Natural killer cell (primary cell): ENCODE measurements at regions of chr16 and their contacts with region 1.

Region 1: DNA sequence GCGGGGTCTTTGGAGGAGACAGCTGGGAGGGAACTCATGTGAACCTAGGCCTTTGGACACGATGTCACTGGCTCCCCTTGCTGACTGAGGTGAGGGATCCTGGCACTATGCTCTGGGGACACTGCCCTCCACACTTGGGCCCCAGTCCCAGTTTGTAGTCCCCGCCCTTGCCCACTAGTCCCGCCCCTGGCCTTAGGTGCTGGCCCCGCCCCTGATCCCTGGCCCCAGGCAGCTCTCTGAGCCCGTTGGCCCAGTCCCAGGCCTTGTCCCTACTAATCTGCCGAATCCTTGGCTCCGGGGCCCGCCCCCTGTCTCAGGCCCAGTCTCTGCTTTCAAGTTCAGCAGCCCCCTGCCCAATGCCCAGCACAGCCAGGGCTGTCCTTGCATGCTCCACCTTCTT is 61.0 kb downstream of the SMPD3 start:
- DNase-seq: no peak
- ATAC-seq: no peak
- H3K4me3 ChIP-seq: no peak overlapping the region
- H3K4me3 Mint-ChIP-seq: no peak overlapping the region
- H3K27ac ChIP-seq: no peak overlapping the region
- H3K27ac Mint-ChIP-seq: no peak overlapping the region
- H3K4me1 ChIP-seq: peaks cover 7% of the 10 kb centered on the region
- H3K4me1 Mint-ChIP-seq: peaks cover 0 to 1% of the 10 kb centered on the region in 2 donors
- H3K27me3 ChIP-seq: no peaks in the 10 kb centered on the region
- H3K27me3 Mint-ChIP-seq: no peaks in the 10 kb centered on the region
- CTCF ChIP-seq: no peak

Region 2: GRCh38 chr16:68328151-68328859 is 59.0 kb before region 1 on chr16:
- intact Hi-C with region 1: no loop called
- DNase-seq: peak; percentile 66 to 92
- ATAC-seq: peak; percentile 93 to 100 (median 100)
- H3K4me3 ChIP-seq: no peak overlapping the region
- H3K4me3 Mint-ChIP-seq: no peak overlapping the region
- H3K27ac ChIP-seq: no peak overlapping the region
- H3K27ac Mint-ChIP-seq: peak overlapping the region in 1 of 2 donors; percentile 4
- H3K4me1 ChIP-seq: peaks cover 3% of the 10 kb centered on the region
- H3K4me1 Mint-ChIP-seq: peaks cover 6% of the 10 kb centered on the region in 2 donors
- H3K27me3 ChIP-seq: no peaks in the 10 kb centered on the region
- H3K27me3 Mint-ChIP-seq: no peaks in the 10 kb centered on the region
- CTCF ChIP-seq: peak; percentile 92

Region 3: DNA sequence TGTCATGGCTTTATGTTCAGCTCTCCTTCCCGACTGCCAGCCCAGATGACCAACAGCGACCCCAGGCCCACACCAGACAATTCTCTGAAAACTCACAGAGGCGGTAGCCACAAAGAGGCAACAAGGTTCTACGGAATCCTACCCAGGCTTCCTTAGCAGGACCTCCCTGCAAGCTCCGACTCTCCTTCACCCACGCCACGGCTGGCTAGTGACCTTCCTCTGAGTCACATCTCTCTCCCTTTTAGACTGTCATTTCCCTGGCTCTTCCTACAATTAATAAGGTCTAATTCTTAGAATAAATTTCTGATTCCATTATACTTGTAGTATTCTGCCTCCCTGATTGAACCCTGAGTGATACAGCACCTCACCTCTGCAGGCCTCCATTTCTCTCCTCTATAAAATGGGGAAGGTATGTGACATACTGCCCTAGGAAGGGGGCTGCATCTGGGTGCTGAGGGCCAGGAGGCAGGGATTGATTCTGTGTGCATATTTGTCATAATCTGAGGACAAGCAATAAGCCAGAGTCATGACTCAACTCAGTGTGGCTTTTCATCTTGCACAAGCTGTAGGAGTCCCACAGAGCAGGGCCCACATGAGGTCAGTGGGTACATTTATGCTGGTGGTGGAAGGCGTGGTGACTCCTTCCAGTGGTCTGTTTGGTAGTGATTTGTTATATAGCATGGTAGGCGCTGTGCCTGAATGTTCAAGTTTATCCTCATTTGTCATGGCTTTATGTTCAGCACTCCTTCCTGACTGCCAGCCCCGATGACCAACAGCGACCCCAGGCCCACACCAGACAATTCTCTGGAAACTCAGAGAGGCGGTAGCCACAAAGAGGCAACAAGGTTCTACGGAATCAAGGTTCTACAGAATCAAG is 14.8 kb after region 1 on chr16:
- intact Hi-C with region 1: loop called (anchors 2 kb)
- DNase-seq: no peak
- ATAC-seq: no peak
- H3K4me3 ChIP-seq: no peak overlapping the region
- H3K4me3 Mint-ChIP-seq: no peak overlapping the region
- H3K27ac ChIP-seq: no peak overlapping the region
- H3K27ac Mint-ChIP-seq: no peak overlapping the region
- H3K4me1 ChIP-seq: no peaks in the 10 kb centered on the region
- H3K4me1 Mint-ChIP-seq: no peaks in the 10 kb centered on the region
- H3K27me3 ChIP-seq: no peaks in the 10 kb centered on the region
- H3K27me3 Mint-ChIP-seq: peaks cover 7 to 8% of the 10 kb centered on the region in 2 donors
- CTCF ChIP-seq: no peak

Region 4: GRCh38 chr16:68417711-68418301 is 30.5 kb after region 1 on chr16:
- intact Hi-C with region 1: loop called (anchors 1 kb)
- DNase-seq: peak; percentile 28 to 90
- ATAC-seq: peak; percentile 74 to 83 (median 80)
- H3K4me3 ChIP-seq: no peak overlapping the region
- H3K4me3 Mint-ChIP-seq: peak overlapping the region; percentile 78
- H3K27ac ChIP-seq: peak overlapping the region; percentile 75
- H3K27ac Mint-ChIP-seq: peak overlapping the region; percentile 87
- H3K4me1 ChIP-seq: peaks cover 33% of the 10 kb centered on the region
- H3K4me1 Mint-ChIP-seq: peaks cover 28% of the 10 kb centered on the region in 2 donors
- H3K27me3 ChIP-seq: no peaks in the 10 kb centered on the region
- H3K27me3 Mint-ChIP-seq: no peaks in the 10 kb centered on the region
- CTCF ChIP-seq: no peak